ENCODE measurements at regions of chr13 and their contacts with region 1.

Region 1: DNA sequence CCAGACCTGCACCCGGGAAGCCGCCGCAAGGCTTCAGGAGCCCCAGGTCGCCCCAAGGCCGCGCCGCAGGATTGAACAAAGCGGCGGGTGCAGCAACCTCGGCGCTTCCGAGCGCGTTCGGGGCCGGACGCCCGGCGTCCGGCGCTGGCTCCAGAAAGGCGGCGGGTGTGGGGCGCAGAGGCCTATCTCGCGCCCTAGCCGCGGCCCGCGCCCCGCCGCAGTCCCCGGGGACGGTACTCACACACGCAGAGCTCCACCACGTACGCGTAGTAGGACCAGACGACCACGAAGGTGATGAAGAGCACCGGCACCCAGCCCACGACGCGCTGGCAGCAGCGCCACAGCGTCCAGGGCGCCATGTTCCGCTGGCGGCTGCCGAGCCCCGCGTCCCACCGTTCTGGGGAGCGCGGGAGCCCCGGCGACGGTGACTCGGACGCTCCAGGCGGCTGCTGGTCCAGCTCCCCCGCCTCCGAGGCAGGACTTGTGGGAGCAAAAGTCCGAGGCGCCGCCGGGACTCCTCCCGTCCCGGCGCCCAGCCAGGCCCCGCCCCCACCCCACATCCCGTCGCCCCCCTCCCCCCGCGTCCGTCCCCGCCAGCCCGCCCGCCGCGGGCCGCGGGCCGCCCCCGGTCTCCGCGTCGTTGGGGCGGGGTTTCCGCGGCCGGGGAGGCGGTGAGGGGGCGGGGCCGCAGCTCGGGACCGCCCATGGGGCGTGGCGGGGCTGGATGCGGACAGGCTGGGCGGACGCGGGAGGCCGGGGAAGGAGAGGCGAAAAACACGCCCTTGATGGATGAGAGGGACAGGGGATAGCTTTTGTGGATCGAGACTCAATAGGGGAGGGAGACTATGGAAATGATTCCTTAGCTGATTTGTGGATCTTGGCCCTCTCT is at the start of gene ZDHHC20:
- DNase-seq: peak; percentile 82
- H3K4me3 ChIP-seq: peak within 1 kb of the TSS; percentile 89 to 98 (median 95)
- H3K27ac ChIP-seq: peak within 1 kb of the TSS; percentile 93
- H3K4me1 ChIP-seq: peaks cover 10% of the 10 kb centered on the region
- H3K27me3 ChIP-seq: no peaks in the 10 kb centered on the region
- CTCF ChIP-seq: no peak
- POLR2A ChIP-seq: peak; percentile 78
- total RNA-seq, gene ZDHHC20: 57.5 and 59.4 TPM in 2 replicates

Region 2: GRCh38 chr13:21164631-21165030 is 294.4 kb before region 1 on chr13:
- CTCF ChIA-PET with region 1: no interaction called
- POLR2A ChIA-PET with region 1: no interaction called
- dilution Hi-C with region 1: no loop called
- intact Hi-C with region 1: no loop called
- DNase-seq: peak; percentile 40
- H3K4me3 ChIP-seq: no peak overlapping the region
- H3K27ac ChIP-seq: no peak overlapping the region
- H3K4me1 ChIP-seq: peaks cover 3% of the 10 kb centered on the region
- H3K27me3 ChIP-seq: no peaks in the 10 kb centered on the region
- CTCF ChIP-seq: no peak
- POLR2A ChIP-seq: no peak

Region 3: DNA sequence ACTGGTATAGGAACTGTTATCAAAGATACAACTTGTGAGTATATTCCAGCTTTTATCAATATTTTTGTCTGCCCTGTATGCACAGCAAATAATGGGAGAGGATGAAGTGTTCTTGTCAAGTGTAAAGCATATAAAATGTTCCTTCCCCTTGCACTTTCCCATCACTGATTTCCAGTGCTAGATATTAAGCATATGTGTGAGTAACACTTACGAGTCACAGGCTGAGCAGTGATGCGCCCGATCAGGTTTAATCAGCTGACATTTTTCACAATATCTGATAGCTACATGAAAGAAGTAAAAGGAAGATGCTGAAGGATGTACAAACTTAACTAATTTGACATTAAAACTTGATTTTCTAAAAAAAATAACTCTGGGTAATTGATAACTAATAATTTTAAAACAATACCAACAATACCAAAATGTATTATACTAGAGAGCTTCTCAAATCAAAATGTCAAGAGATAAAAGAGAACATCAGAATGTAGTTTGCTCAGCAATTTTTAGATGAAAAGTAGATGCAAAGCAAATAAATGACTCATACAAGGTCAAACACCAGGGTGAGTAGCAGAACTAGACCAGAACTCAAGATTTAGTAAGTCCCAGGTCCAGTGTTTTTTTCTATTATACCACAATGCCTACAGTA is 56.4 kb before region 1 on chr13:
- CTCF ChIA-PET with region 1: interaction called, 4 read pairs
- POLR2A ChIA-PET with region 1: no interaction called
- dilution Hi-C with region 1: no loop called
- intact Hi-C with region 1: loop called (anchors 5 kb)
- DNase-seq: peak; percentile 16
- H3K4me3 ChIP-seq: no peak overlapping the region
- H3K27ac ChIP-seq: no peak overlapping the region
- H3K4me1 ChIP-seq: peaks cover 28% of the 10 kb centered on the region
- H3K27me3 ChIP-seq: no peaks in the 10 kb centered on the region
- CTCF ChIP-seq: no peak
- POLR2A ChIP-seq: no peak

Region 4: DNA sequence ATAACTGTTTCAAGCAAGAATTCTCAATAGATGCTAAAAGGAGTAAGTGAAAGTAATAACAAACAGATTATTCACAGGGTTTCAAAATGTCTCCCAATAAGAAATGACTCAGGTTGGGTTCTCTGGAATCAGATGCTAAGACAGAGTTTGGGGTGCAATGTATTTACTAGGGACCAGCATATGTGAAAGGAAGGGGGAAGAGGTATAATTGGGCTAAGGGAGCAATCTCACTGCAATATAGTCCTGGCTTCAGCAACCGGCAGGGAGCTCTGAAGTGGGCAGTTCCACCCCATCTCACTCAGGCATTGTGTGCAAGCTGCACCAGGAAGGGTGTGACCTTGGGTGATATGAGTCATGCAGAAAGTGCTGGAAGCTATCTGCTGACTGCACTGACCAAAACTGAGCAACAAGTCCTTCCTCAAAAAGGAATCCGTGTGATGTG is 23.3 kb before region 1 on chr13:
- CTCF ChIA-PET with region 1: no interaction called
- POLR2A ChIA-PET with region 1: no interaction called
- dilution Hi-C with region 1: no loop called
- intact Hi-C with region 1: loop called (anchors 1 kb)
- DNase-seq: peak; percentile 85
- H3K4me3 ChIP-seq: peak overlapping the region in 1 of 3 experiments; percentile 26
- H3K27ac ChIP-seq: peak overlapping the region; percentile 58
- H3K4me1 ChIP-seq: peaks cover 18% of the 10 kb centered on the region
- H3K27me3 ChIP-seq: no peaks in the 10 kb centered on the region
- CTCF ChIP-seq: no peak
- POLR2A ChIP-seq: no peak

Measured in endothelial cell of umbilical vein (primary cell).